ENCODE measurements at regions of chr10 and their contacts with region 1.

Region 1: DNA sequence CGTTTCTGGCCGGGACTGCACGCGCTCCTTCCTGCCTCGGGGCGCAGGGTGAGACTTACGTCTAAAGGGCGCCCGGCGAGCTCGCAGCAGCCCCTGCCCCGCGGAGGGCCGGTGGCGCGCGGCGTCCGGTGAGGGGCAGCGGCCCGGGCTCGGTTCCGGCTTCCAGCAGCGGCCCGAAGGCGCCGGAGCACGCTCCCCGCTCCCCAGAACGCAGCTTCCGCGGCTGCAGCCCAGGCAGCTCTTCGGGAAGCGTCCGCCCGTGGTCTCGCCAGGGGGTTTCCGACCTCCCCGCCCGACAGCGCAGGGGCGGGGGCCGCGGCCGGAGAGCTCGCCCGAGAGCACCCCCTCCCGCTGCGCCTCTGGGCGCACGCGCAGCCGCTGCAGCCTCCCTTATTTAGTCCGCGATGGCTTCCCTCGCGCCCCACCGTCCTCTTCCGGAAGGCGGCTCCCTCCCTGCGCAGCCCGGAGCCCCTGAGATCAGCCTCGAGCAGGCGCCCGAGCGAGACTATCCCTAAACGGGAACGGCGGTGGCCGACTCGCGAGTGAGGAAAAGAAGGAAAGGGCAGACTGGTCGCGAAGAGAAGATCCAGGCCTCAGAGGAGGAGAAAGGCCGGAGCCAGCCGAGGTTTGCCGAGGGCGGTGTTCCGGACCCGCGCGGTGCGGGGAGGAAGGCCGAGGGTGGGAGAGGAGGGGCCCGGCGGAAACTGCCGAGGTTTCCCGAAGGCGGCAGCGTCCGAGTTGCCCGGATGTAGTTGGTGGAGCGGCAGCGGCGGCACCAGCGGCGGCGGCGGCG is at the start of gene WAC:
- DNase-seq: peak; percentile 96 to 98
- ATAC-seq: peak; percentile 95 to 96 (median 96)
- H3K4me3 ChIP-seq: peak within 1 kb of the TSS; percentile 89
- H3K27ac ChIP-seq: peak within 1 kb of the TSS; percentile 99
- H3K4me1 ChIP-seq: peaks cover 19% of the 10 kb centered on the region
- H3K27me3 ChIP-seq: no peaks in the 10 kb centered on the region
- CTCF ChIP-seq: no peak
- total RNA-seq, gene WAC: 61.9 to 75.1 (median 65.2) TPM

Region 2: GRCh38 chr10:28432210-28432676 is 100.3 kb before region 1 on chr10:
- intact Hi-C with region 1: loop called in 1 of 2 experiments (anchors 5 kb)
- DNase-seq: peak; percentile 31 to 66
- ATAC-seq: peak; percentile 62 to 89 (median 69)
- H3K4me3 ChIP-seq: peak overlapping the region; percentile 5
- H3K27ac ChIP-seq: no peak overlapping the region
- H3K4me1 ChIP-seq: no peaks in the 10 kb centered on the region
- H3K27me3 ChIP-seq: no peaks in the 10 kb centered on the region
- CTCF ChIP-seq: peak; percentile 80

Region 3: GRCh38 chr10:28444031-28444430 is 88.5 kb before region 1 on chr10:
- intact Hi-C with region 1: no loop called
- DNase-seq: no peak
- ATAC-seq: no peak
- H3K4me3 ChIP-seq: no peak overlapping the region
- H3K27ac ChIP-seq: no peak overlapping the region
- H3K4me1 ChIP-seq: no peaks in the 10 kb centered on the region
- H3K27me3 ChIP-seq: peaks cover 0 to 2% (median 0%) of the 10 kb centered on the region in 3 donors
- CTCF ChIP-seq: no peak

Region 4: GRCh38 chr10:28569506-28570159 is 37.1 kb after region 1 on chr10:
- intact Hi-C with region 1: no loop called
- DNase-seq: no peak
- ATAC-seq: no peak
- H3K4me3 ChIP-seq: no peak overlapping the region
- H3K27ac ChIP-seq: no peak overlapping the region
- H3K4me1 ChIP-seq: peaks cover 76% of the 10 kb centered on the region
- H3K27me3 ChIP-seq: no peaks in the 10 kb centered on the region
- CTCF ChIP-seq: no peak

Region 5: GRCh38 chr10:28587970-28588290 is 55.4 kb after region 1 on chr10:
- intact Hi-C with region 1: loop called (anchors 5 kb)
- DNase-seq: no peak
- ATAC-seq: peak; percentile 57 to 80 (median 76)
- H3K4me3 ChIP-seq: no peak overlapping the region
- H3K27ac ChIP-seq: peak overlapping the region; percentile 5
- H3K4me1 ChIP-seq: peaks cover 30% of the 10 kb centered on the region
- H3K27me3 ChIP-seq: no peaks in the 10 kb centered on the region
- CTCF ChIP-seq: peak; percentile 32

Region 6: DNA sequence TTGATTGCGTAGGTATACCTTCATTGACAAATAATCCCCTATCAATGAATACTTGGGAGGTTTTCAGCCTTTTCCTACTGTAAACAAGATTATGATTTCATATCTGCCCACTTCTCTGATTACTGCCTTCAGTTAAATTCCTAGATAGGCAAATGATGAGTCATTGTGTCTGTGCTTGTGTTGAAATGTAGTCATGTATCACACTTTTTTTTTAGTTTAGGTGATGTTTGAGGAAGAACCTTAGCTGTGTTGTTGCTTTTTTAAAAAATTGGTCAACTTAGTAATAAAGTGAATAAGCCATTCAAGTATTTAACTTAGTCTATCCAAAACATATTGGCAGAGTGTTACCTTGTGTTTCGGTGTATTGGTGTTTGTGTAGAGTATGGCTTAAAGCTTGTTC is 60.4 kb after region 1 on chr10:
- intact Hi-C with region 1: loop called (anchors 5 kb)
- DNase-seq: no peak
- ATAC-seq: peak; percentile 76 to 86 (median 78)
- H3K4me3 ChIP-seq: no peak overlapping the region
- H3K27ac ChIP-seq: peak overlapping the region; percentile 4
- H3K4me1 ChIP-seq: peaks cover 27% of the 10 kb centered on the region
- H3K27me3 ChIP-seq: no peaks in the 10 kb centered on the region
- CTCF ChIP-seq: no peak